Prostate gland (tissue), 2 donors: ENCODE measurements at regions of chr22 and their contacts with region 1.

Region 1: GRCh38 chr22:43385770-43386641 is 25.8 kb upstream of the MPPED1 start:
- DNase-seq: peak; percentile 66
- H3K4me3 ChIP-seq: no peak overlapping the region
- H3K27ac ChIP-seq: no peak overlapping the region
- H3K4me1 ChIP-seq: no peaks in the 10 kb centered on the region
- H3K27me3 ChIP-seq: no peaks in the 10 kb centered on the region
- CTCF ChIP-seq: peak; percentile 72 to 92 (median 82)
- POLR2A ChIP-seq: no peak

Region 2: DNA sequence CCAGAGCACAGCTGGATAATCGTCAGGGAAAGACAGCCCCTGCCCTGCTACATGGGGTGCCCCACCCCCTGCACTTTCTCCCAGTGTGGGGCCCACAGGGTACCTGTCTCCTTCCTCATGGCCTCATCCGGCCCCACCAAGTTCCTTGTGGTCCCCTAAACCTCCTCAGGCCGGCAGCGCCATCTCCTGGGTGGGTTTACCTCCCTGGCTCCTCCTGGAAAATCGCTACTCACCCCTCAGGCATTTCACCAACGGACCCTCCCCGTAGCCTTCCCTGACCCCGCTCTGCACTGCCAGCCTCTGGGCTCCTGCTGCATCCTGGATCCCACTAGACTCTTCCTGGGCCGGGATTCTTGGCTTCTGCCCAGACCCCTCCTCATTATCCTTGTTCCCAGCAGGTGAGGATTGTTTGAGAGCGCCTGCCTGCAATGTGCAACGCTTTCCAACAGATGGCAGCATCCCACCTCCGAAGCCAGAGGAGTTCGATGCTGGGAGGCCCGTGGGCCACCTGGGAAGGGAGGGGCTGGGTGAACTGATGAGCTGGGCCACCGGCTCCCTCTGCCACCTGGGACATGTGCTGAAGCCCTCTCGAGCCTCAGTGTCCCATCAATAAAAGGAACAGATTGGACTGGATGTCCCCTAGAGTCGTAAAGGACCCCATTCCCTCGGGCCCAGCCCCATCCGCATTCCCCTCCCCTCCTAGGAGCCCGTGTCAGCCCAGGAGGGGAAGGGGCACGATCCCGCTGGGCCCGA is 154.9 kb before region 1 on chr22:
- intact Hi-C with region 1: loop called (anchors 5 kb)
- DNase-seq: peak; percentile 17
- H3K4me3 ChIP-seq: no peak overlapping the region
- H3K27ac ChIP-seq: no peak overlapping the region
- H3K4me1 ChIP-seq: peaks cover 8% of the 10 kb centered on the region
- H3K27me3 ChIP-seq: no peaks in the 10 kb centered on the region
- CTCF ChIP-seq: peak; percentile 61 to 85 (median 72)
- POLR2A ChIP-seq: no peak

Region 3: DNA sequence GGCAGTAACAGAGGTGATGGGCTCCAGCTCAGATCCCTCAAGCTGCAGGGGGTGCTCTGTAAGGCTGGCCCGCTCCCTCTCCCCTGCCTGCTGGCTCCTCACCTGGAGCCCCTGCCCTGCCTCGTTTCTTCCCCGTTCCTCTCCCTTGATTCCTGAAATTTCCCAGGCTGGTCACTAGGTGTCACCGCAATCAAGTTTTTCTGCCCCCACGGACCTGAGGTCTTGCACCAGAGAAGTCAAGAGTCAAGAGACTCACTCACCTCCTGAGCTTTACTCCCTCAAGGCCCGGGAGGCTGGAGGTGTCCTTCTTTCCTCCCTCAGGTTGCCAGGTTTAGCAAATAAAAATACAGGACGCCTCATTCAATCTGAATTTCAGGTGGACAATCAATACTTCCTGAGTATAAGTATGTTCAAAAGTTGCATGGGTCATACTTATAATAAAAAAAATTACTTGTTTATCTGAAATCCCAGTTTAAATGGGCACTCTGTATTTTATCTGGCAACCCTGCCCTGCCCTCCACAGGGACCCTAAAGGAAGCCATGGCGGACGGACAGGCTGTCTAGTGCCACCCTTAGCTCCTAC is 112.0 kb before region 1 on chr22:
- intact Hi-C with region 1: loop called (anchors 5 kb)
- DNase-seq: peak; percentile 40
- H3K4me3 ChIP-seq: no peak overlapping the region
- H3K27ac ChIP-seq: no peak overlapping the region
- H3K4me1 ChIP-seq: no peaks in the 10 kb centered on the region
- H3K27me3 ChIP-seq: no peaks in the 10 kb centered on the region
- CTCF ChIP-seq: peak; percentile 36 to 79 (median 70)
- POLR2A ChIP-seq: no peak

Region 4: GRCh38 chr22:43884600-43885325 is 498.8 kb after region 1 on chr22:
- intact Hi-C with region 1: loop called (anchors 10 kb)
- DNase-seq: no peak
- H3K4me3 ChIP-seq: no peak overlapping the region
- H3K27ac ChIP-seq: no peak overlapping the region
- H3K4me1 ChIP-seq: no peaks in the 10 kb centered on the region
- H3K27me3 ChIP-seq: peaks cover 9% of the 10 kb centered on the region
- CTCF ChIP-seq: peak; percentile 27 to 56 (median 46)
- POLR2A ChIP-seq: no peak